Activated CD4-positive, alpha-beta memory T cell treated with anti-CD3 and anti-CD28 coated beads, Interleukin-2, amount 10 ng/mL, durations not matched to agents 7 days and 5 days (primary cell): ENCODE measurements at regions of chr10 and their contacts with region 1.

Region 1: GRCh38 chr10:119207367-119207668 is at the start of gene GRK5:
- DNase-seq: peak; percentile 97
- H3K4me3 Mint-ChIP-seq: peak within 1 kb of the TSS; percentile 92
- H3K27ac Mint-ChIP-seq: peak within 1 kb of the TSS; percentile 97
- H3K4me1 Mint-ChIP-seq: peaks cover 46% of the 10 kb centered on the region
- H3K27me3 Mint-ChIP-seq: no peaks in the 10 kb centered on the region
- total RNA-seq, gene GRK5: 29.8 to 30.6 TPM

Region 2: DNA sequence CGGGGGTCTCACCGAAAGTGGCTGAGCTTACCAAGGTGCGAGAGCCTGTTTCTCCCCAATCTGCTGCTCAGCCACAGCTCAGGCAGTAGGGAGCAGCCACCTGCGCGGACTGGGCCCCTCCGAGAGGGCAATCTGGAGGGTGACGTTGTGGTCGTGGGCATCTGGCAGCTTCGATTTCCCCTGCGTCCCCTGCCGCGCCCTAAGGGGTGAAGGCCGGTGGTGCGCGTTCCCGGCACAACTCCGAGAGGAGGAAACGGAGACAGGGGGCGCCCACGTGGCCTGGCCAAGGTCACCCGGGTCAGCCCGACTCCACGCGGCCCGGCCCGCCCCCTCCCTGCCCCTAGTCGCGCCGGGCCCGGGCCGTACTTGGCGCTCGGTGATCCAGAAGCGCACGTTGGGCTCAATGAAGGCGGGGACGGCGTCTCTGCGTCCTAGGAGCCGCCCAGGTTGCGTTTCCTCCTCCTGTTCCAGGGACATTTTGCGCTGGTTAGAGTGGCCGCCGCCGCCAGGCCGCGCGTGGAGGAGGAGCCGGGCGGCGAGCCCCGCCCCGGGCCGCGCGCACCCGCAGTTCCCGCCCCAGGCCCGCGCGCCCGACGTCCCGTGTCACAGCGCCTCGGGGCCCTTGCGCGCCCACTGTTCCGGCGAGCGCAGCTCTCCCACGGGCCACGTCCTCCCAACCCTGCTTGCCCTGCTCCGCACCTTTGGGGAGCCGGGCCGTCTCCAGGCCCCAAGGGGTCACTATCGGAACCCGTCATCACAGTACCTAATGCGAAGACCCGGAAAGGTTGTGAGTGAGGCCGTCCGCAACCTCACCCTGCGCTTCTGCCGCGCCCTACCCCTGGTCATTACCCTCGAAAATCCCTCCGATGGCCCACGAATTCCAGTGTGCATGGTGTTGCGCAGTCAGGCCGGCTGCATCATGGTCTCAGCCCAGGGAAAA is 41.9 kb before region 1 on chr10 and contains the start of gene SFXN4:
- CTCF ChIA-PET with region 1: interaction called, 7 read pairs
- POLR2A ChIA-PET with region 1: interaction called, 15 read pairs
- DNase-seq: peak; percentile 85
- H3K4me3 Mint-ChIP-seq: peak within 1 kb of the TSS; percentile 88
- H3K27ac Mint-ChIP-seq: peak within 1 kb of the TSS; percentile 90
- H3K4me1 Mint-ChIP-seq: peaks cover 44% of the 10 kb centered on the region
- H3K27me3 Mint-ChIP-seq: no peaks in the 10 kb centered on the region
- total RNA-seq, gene SFXN4: 19.6 to 22.6 TPM

Region 3: DNA sequence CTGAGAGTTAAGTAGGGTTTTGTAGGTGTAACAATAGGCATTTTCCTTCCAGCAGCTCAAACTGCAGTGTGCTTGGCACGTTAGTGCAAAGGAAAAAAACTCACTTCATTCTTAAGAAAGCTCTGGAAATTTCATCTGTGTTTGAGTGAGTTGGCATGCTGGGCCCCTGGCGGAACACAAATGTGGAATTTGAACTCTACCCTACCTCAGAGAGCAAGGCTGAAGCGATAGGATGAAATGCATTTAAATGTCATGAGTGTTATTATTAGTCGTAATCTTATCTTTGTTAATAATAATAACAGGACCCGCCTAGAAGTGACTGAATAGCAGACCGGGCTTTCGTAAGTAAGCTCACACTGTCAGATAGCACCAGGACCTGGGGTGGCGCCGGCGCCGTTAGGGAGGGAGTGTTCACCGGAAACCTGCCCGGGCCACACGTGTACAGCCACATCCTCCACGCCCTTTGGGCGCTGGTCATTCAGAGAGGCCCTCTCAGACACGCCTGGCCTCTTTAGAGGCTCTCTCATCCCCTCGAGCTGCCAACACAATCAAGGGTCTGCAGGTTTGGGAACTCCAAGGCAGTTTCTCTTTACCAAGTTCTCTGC is 63.5 kb after region 1 on chr10:
- CTCF ChIA-PET with region 1: interaction called, 20 read pairs
- POLR2A ChIA-PET with region 1: interaction called, 43 read pairs
- DNase-seq: peak; percentile 64
- H3K4me3 Mint-ChIP-seq: peak overlapping the region; percentile 24
- H3K27ac Mint-ChIP-seq: peak overlapping the region; percentile 91
- H3K4me1 Mint-ChIP-seq: peaks cover 58% of the 10 kb centered on the region
- H3K27me3 Mint-ChIP-seq: no peaks in the 10 kb centered on the region

Region 4: GRCh38 chr10:119416855-119417254 is 209.5 kb after region 1 on chr10:
- CTCF ChIA-PET with region 1: interaction called, 49 read pairs
- POLR2A ChIA-PET with region 1: interaction called, 15 read pairs
- DNase-seq: peak; percentile 77
- H3K4me3 Mint-ChIP-seq: no peak overlapping the region
- H3K27ac Mint-ChIP-seq: no peak overlapping the region
- H3K4me1 Mint-ChIP-seq: no peaks in the 10 kb centered on the region
- H3K27me3 Mint-ChIP-seq: no peaks in the 10 kb centered on the region

Region 5: DNA sequence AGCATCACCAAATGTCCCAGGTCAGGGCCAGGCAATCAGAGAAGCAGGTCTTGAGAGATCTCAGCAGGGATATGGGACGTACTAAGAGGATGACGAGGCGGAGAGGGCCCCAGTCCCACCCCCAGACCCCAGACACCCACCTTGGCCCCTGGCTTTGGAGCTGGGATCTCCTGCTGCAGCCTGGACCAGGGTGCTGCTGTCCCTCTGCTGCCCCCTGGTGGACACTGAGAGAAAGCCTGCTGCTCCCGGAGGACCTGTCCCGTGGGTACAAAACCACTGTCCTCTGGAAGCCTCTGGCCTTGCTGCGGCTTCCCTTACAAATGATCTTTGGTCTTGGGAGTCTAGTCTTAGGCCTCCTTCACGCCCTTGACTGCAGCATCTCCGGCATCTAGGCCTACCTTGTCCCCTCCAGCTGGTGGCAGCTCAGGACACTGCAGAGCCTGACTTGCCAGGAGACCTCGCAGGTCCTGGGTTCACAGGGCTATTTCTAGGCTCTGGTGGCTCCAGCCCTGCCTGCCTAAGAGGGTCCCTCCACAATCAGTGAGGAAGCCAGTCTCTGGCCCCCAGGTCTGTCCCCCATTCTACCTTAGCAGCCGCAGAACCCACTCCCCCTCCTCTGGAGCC is 238.1 kb after region 1 on chr10:
- CTCF ChIA-PET with region 1: interaction called, 20 read pairs
- POLR2A ChIA-PET with region 1: interaction called, 13 read pairs
- DNase-seq: peak; percentile 85
- H3K4me3 Mint-ChIP-seq: no peak overlapping the region
- H3K27ac Mint-ChIP-seq: no peak overlapping the region
- H3K4me1 Mint-ChIP-seq: peaks cover 15% of the 10 kb centered on the region
- H3K27me3 Mint-ChIP-seq: no peaks in the 10 kb centered on the region

Region 6: GRCh38 chr10:119542988-119543813 is 335.9 kb after region 1 on chr10:
- CTCF ChIA-PET with region 1: interaction called, 11 read pairs
- POLR2A ChIA-PET with region 1: interaction called, 16 read pairs
- DNase-seq: peak; percentile 70
- H3K4me3 Mint-ChIP-seq: peak overlapping the region; percentile 78
- H3K27ac Mint-ChIP-seq: peak overlapping the region; percentile 80
- H3K4me1 Mint-ChIP-seq: peaks cover 45% of the 10 kb centered on the region
- H3K27me3 Mint-ChIP-seq: peaks cover 25% of the 10 kb centered on the region